Sigmoid colon (tissue), 7 donors: ENCODE measurements at regions of chr10 and their contacts with region 1.

Region 1: DNA sequence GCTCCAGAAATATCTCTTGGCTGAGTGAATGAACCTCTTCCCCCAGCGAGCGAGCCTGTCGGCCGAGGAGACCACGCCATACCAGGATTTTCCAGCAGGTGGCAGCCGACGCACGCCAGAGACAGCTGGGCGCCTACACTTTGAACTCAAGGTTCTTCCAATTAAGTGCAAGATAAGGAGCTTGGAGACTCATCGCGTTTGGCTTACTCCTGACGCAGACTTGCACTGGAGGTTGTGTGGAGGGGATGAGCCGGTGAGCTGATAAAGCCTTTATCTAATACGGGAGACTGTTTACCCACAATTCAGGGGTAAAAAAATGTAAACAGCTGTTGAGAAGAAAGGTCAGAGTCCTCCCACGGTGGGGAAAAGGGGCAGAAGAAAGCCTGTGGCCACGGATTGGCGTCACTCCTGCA is 45.9 kb upstream of the EMX2 start:
- DNase-seq: peak; percentile 85
- H3K4me3 ChIP-seq: no peak overlapping the region
- H3K27ac ChIP-seq: no peak overlapping the region
- H3K4me1 ChIP-seq: peaks cover 0 to 7% (median 3%) of the 10 kb centered on the region in 4 donors
- H3K27me3 ChIP-seq: no peaks in the 10 kb centered on the region
- CTCF ChIP-seq: peak; percentile 84 to 95 (median 86)
- EP300 ChIP-seq: no peak
- POLR2A ChIP-seq: no peak

Region 2: GRCh38 chr10:118241229-118242137 is 744.9 kb after region 1 on chr10:
- intact Hi-C with region 1: loop called (anchors 1 kb)
- DNase-seq: peak; percentile 88
- H3K4me3 ChIP-seq: no peak overlapping the region
- H3K27ac ChIP-seq: no peak overlapping the region
- H3K4me1 ChIP-seq: peaks cover 0 to 6% (median 0%) of the 10 kb centered on the region in 4 donors
- H3K27me3 ChIP-seq: peaks cover 3 to 81% (median 30%) of the 10 kb centered on the region in 3 donors
- CTCF ChIP-seq: peak; percentile 57 to 92 (median 86)
- EP300 ChIP-seq: no peak
- POLR2A ChIP-seq: no peak

Region 3: DNA sequence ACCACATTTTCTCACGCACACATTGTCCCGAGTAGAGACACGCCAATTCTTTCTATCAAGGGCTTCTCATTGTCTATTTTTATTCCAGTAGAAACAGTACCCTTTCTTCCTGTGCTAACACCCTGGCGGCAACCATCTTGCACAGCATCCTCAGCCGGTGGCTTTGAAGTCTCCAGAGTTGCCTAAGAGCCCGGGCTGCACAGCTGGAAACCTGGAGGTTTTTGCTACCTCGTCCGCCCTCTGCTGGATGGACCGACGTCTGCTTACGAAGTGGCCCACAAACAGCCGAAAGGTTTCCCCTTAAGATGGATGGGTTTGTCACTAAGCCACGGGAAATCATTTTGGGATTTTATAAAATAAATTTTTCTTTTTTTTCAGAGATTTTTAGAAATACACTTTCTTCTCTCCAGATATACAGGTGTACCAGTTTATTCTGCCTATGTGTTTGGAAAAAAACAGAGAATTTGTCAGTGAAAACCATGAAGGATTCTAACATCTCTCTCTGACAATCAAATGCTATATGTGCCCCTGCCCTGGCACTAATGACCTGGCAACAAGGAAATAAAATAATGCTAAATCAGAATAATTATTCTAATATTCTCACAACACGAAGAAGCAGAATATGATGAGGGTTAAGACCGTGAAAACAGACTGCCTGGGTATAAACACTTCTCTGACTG is 927.3 kb after region 1 on chr10:
- intact Hi-C with region 1: loop called (anchors 5 kb)
- DNase-seq: peak; percentile 85
- H3K4me3 ChIP-seq: no peak overlapping the region
- H3K27ac ChIP-seq: no peak overlapping the region
- H3K4me1 ChIP-seq: no peaks in the 10 kb centered on the region
- H3K27me3 ChIP-seq: no peaks in the 10 kb centered on the region
- CTCF ChIP-seq: peak in 3 of 4 experiments; percentile 39 to 71 (median 60)
- EP300 ChIP-seq: no peak
- POLR2A ChIP-seq: no peak

Region 4: DNA sequence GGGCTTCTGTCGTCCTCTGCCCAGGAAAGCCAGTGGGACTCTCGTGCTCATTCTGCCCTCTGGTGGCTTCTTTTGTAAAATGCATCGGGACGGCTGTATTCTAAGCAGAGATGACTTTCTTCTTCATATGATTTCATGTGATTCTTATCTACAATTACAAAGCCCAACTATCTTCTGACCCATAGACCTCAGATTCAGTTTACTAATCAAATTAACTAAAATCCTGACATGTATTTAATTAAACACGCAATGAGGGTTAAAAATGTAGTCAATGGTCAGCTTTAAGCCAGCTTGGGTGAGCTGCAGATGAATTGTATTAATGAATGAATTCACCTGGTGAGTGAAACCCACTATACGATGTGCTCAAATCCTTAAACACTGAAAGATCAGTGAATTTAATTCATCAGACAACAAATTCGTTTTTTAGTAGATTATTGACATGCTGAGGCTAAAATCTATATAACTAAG is 963.1 kb after region 1 on chr10:
- intact Hi-C with region 1: loop called (anchors 2 kb)
- DNase-seq: peak; percentile 75
- H3K4me3 ChIP-seq: no peak overlapping the region
- H3K27ac ChIP-seq: no peak overlapping the region
- H3K4me1 ChIP-seq: no peaks in the 10 kb centered on the region
- H3K27me3 ChIP-seq: peaks cover 0 to 17% (median 0%) of the 10 kb centered on the region in 3 donors
- CTCF ChIP-seq: peak in 3 of 4 experiments; percentile 40 to 69 (median 48)
- EP300 ChIP-seq: no peak
- POLR2A ChIP-seq: no peak